Vagina (tissue), 2 donors: ENCODE measurements at regions of chr7 and their contacts with region 1.

Region 1: DNA sequence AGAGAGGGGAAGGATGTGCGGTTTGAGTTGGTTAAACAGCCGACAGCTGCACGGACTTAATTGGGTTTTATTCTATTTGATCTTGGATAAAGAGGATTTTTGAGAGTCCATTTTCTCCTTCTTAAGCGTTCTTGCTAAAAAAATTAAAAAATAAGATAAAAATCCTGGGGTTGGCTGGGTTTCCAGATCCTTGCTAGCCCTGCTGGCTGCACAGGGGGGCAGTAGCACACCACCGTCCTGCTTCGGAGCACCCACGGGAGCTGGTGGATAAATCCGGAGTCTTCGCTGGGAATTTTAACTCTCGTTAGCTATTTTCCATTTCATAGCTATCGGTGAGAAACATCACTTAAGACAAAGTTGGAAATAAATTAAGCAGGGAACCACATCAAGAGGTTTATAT is 792.0 kb downstream of the TYW1 start:
- DNase-seq: no peak
- H3K4me3 ChIP-seq: no peak overlapping the region
- H3K27ac ChIP-seq: no peak overlapping the region
- H3K4me1 ChIP-seq: no peaks in the 10 kb centered on the region
- H3K27me3 ChIP-seq: no peaks in the 10 kb centered on the region
- CTCF ChIP-seq: peak in 1 of 3 experiments; percentile 20
- POLR2A ChIP-seq: no peak

Region 2: DNA sequence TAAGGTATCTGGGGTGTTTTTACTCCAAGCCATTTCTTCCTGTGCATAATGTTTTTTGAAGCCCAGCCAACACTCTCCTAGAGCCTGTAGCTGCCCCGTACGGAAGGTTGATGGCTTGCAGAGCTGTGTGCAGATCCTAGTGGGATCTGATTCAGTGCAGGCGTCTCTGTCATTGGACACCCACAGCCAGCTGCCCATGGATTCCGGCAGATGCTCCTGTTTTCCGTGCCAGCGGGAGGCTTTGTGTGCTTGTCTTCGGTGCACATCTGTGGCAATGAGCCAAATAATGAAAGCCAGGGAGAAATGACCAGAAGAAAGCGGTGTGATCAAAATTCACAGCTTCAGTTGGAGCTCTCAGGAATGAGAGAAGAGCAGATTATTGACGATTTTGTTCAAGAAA is 365.6 kb before region 1 on chr7:
- intact Hi-C with region 1: loop called (anchors 5 kb)
- DNase-seq: no peak
- H3K4me3 ChIP-seq: no peak overlapping the region
- H3K27ac ChIP-seq: no peak overlapping the region
- H3K4me1 ChIP-seq: no peaks in the 10 kb centered on the region
- H3K27me3 ChIP-seq: no peaks in the 10 kb centered on the region
- CTCF ChIP-seq: no peak
- POLR2A ChIP-seq: no peak

Region 3: DNA sequence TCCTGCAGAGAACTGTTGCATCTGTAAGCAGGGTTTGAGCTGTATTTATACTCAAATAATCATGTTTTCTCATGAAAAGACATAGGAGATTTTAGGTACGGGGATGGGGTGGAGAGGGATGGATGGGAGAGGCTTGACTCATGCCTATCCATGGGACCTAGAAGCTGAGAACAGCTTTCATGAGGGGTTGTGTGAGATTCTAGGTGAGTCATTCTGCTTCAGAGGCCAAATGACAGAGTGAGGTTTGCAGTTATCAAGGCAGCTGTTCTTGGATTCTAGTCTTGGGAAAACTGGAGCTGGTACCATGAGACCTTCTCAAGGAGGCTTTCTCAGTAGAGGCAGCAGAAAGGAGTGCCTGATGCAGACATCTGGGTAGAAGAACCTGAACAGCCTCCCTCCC is 45.2 kb before region 1 on chr7:
- intact Hi-C with region 1: no loop called
- DNase-seq: no peak
- H3K4me3 ChIP-seq: no peak overlapping the region
- H3K27ac ChIP-seq: no peak overlapping the region
- H3K4me1 ChIP-seq: peaks cover 11% of the 10 kb centered on the region
- H3K27me3 ChIP-seq: no peaks in the 10 kb centered on the region
- CTCF ChIP-seq: no peak
- POLR2A ChIP-seq: no peak